IMR-90 (cell line): ENCODE measurements at regions of chr16 and their contacts with region 1.

Region 1: DNA sequence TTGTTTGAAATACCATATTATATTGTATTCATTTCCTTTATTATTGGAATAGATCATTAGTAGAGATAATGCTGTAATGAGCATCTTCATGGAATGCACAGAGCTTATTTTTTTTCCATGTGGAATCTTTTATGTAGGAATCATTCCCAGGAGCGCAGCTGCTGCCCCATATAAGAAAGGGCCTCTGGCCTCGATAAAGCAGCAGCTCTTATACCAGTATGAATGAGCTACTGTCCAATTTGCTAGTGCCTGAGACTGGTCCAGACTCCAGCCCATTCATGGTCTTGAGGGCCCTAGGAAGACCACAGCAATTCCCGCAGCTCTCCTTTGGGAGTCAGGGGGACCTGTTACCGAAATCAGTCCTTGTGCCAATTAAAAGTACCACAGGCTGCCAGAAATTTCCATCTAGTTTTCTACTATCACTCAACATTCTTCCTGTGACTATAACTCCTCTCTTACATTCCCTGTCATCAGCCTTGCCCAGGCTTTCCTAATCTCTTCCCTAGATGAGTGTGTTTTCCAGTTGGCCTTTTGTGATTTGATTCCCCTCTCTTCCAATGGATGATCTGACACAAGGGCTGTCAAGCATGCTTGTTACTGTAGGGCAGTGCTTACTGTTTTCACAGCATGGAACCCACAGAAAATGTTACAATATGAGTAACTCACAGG is 1.9 kb downstream of the ZNF843 start:
- DNase-seq: no peak
- ATAC-seq: no peak
- H3K4me3 ChIP-seq: no peak overlapping the region
- H3K27ac ChIP-seq: no peak overlapping the region
- H3K4me1 ChIP-seq: no peaks in the 10 kb centered on the region
- H3K27me3 ChIP-seq: no peaks in the 10 kb centered on the region
- CTCF ChIP-seq: no peak
- POLR2A ChIP-seq: no peak
- RAD21 ChIP-seq: no peak

Region 2: DNA sequence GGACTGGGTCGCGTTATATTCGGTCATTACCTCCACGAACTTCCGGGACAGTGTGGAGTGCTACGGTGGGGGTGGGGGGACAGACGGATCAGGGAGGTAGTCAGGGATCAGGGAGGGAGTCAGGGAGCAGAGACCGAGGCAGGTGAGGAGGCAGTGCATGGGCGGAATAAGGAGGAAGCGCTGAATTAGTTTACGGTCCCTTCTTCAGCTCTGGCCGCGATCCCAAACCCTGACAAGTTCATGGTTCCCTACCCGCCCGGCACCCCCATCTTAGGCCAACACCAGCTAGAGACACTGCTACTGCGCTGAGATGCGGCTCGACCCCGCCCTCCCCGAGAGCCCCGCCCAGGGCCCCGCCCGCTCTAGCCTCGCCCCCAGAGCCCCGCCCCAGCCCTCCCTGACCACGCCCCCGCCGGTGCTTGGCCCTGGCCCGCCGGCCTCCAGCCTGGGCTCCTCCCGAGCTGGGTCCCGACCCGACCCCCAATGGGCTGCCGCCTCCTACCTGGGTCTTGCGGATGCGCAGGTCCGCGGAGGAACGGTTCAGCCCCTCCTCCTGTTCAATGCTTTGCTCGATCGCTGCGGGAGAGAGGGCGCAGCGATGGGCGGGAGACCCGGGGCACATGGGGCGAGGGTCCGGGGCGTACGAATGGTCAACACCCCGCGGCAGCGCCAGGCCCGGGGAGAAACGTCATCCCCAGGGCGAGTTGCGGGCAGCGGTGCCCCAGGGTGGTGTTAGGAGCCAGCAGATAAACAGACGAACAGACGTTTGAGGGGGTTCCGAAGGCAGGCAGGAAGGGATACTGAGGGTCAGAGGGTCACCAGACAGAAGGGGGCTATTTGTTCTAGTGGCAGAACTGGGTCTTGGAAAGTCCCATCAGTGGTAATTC is 443.4 kb before region 1 on chr16:
- CTCF ChIA-PET with region 1: no interaction called
- POLR2A ChIA-PET with region 1: no interaction called
- dilution Hi-C with region 1: no loop called
- in situ Hi-C with region 1: loop called (anchors 10 kb)
- intact Hi-C with region 1: no loop called
- DNase-seq: peak; percentile 41
- ATAC-seq: peak; percentile 92
- H3K4me3 ChIP-seq: peak overlapping the region; percentile 54
- H3K27ac ChIP-seq: peak overlapping the region; percentile 69
- H3K4me1 ChIP-seq: peaks cover 27% of the 10 kb centered on the region
- H3K27me3 ChIP-seq: no peaks in the 10 kb centered on the region
- CTCF ChIP-seq: no peak
- POLR2A ChIP-seq: no peak
- RAD21 ChIP-seq: no peak

Region 3: DNA sequence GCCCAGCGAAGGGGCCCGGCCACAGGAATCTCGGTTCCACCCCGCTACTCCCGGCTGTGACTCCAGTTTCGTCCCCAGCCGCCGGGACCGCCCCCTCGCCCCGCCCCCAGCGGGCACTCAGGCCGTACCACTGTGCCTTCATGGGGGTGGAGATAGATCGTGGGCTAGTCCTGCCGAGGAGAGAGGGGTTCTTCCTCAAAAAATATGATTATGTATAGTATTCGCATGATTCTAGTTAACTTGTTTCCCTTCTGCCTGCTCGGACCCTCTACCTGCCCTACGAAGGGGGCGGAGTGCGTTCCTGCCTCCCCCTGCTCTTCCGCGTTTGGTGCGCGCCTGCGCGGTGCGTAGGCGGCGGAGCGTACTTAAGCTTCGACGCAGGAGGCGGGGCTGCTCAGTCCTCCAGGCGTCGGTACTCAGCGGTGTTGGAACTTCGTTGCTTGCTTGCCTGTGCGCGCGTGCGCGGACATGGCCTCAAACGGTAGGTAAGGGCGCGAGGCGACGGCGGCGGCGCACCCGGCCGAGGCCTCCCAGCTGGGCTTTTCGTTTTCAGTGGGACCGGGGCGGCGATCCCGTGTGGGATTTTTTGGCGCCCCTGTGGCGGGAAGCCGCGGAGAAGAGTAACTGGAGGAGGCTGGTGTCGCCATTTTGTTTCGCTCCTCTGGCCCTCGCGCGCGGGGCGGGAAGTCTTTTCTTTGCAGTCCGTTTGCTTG is 260.7 kb before region 1 on chr16 and contains the start of gene FUS:
- CTCF ChIA-PET with region 1: no interaction called
- POLR2A ChIA-PET with region 1: no interaction called
- dilution Hi-C with region 1: no loop called
- in situ Hi-C with region 1: no loop called
- intact Hi-C with region 1: loop called (anchors 1 kb)
- DNase-seq: peak; percentile 83
- ATAC-seq: peak; percentile 84
- H3K4me3 ChIP-seq: peak within 1 kb of the TSS; percentile 69
- H3K27ac ChIP-seq: peak within 1 kb of the TSS; percentile 97
- H3K4me1 ChIP-seq: peaks cover 6% of the 10 kb centered on the region; the same call in 1 of the 2 replicates
- H3K27me3 ChIP-seq: no peaks in the 10 kb centered on the region
- CTCF ChIP-seq: no peak
- POLR2A ChIP-seq: peak; percentile 100
- RAD21 ChIP-seq: no peak
- total RNA-seq, gene FUS: 42.8 and 51.9 TPM in 2 replicates

Region 4: DNA sequence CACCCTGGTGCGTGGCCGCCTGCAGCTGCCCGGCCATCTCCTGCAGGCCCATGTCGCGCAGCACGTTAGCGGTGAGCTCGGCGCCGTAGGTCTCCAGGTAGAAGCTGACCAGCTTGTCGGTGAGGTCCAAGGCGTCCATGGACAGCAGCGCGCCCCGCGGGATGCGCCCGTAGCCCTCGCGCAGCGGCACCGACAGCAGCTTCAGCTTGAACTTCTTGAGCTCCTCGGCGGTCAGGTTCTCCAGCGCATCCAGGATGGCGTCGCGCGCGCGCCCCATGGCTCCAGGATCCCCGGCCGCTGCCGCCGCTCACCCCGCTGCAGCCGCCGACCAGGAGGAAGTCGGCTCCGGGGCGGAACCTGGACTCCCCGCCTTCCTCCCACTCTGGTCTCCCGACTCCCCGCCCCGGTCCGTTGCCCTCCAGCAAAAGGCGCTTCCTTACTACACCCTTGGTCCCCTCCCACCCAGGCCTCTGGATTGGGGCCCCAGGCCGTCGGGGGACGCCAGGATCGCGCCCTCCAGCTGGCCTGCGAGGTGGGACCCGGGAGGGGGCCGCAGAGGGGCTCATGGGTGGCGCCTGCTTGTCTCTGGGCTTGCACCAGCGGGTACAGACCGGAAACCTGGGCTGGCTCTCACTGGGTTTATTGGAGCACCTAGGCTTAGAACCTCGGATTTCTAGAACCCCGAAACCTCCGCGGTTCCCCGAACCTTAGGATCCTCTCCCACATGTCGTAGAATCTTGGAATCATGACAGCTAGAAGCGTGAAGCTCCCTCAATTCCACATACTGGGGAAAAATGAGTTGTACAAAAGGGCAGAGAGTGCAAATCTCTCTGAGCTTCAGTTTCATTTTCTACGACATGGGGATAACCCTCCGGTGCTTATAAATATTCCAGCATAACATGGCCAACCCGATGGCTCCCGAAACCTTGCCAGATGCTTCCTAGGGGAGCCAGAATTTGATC is 238.0 kb before region 1 on chr16 and contains the start of gene PYCARD:
- CTCF ChIA-PET with region 1: no interaction called
- POLR2A ChIA-PET with region 1: no interaction called
- dilution Hi-C with region 1: no loop called
- in situ Hi-C with region 1: loop called (anchors 5 kb)
- intact Hi-C with region 1: loop called (anchors 2 kb)
- DNase-seq: peak; percentile 19
- ATAC-seq: peak; percentile 59
- H3K4me3 ChIP-seq: peak within 1 kb of the TSS; percentile 87
- H3K27ac ChIP-seq: peak within 1 kb of the TSS; percentile 13; the same call in 1 of the 2 replicates
- H3K4me1 ChIP-seq: peaks cover 4% of the 10 kb centered on the region; the same call in 1 of the 2 replicates
- H3K27me3 ChIP-seq: peaks cover 16% of the 10 kb centered on the region
- CTCF ChIP-seq: no peak
- POLR2A ChIP-seq: no peak
- RAD21 ChIP-seq: no peak; the same call in 1 of the 2 replicates
- total RNA-seq, gene PYCARD: 10.2 and 13.1 TPM in 2 replicates

Region 5: DNA sequence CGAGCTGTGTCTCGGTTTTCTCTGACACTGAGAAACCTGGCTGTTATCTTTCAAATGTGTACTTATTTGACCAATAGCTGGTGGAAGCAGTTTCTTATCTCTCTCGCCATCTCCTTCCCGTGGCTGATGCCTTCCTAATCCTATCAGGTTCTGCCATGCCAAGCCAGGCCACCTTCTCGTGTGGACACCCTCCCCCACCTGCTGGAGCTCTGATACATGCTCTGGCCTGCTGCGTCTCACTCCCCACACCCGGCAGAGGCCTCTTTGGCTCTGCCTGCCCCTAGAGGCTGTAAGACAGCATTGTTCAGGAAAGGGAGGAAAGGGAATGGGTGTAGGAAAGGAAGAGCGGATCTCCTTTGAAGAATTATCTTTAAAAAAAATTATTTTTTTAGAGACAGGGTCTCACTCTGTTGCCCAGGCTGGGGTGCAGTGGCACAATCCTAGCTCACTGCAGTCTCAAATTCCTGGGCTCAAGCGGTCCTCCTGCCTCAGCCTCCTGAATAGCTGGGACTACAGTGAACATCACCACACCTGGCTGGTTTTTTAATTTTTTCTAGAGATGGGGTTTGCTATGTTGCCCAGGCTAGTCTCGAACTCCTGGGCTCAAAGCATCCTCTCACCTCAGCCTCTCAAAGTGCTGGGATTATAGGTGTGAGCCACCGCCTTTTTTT is 11.2 kb after region 1 on chr16:
- CTCF ChIA-PET with region 1: interaction called, 11 read pairs
- POLR2A ChIA-PET with region 1: no interaction called
- dilution Hi-C with region 1: no loop called
- in situ Hi-C with region 1: no loop called
- intact Hi-C with region 1: no loop called
- DNase-seq: peak; percentile 80
- ATAC-seq: peak; percentile 80
- H3K4me3 ChIP-seq: no peak overlapping the region
- H3K27ac ChIP-seq: peak overlapping the region; percentile 38; the same call in 1 of the 2 replicates
- H3K4me1 ChIP-seq: peaks cover 18% of the 10 kb centered on the region
- H3K27me3 ChIP-seq: no peaks in the 10 kb centered on the region
- CTCF ChIP-seq: peak; percentile 72
- POLR2A ChIP-seq: 0 out of 2 replicates have a peak, but pooled peaks have one; percentile 14
- RAD21 ChIP-seq: peak; percentile 69